ENCODE measurements at regions of chr2 and their contacts with region 1.

Region 1: GRCh38 chr2:197293252-197294007 is 17.1 kb downstream of the ANKRD44 start:
- DNase-seq: no peak
- ATAC-seq: peak; percentile 41
- H3K4me3 Mint-ChIP-seq: peak overlapping the region; percentile 78
- H3K27ac Mint-ChIP-seq: peak overlapping the region; percentile 96
- H3K4me1 Mint-ChIP-seq: peaks cover 91% of the 10 kb centered on the region
- H3K27me3 Mint-ChIP-seq: no peaks in the 10 kb centered on the region
- CTCF ChIP-seq: no peak

Region 2: GRCh38 chr2:197198890-197199289 is 94.5 kb before region 1 on chr2:
- CTCF ChIA-PET with region 1: no interaction called
- POLR2A ChIA-PET with region 1: interaction called, 14 read pairs
- intact Hi-C with region 1: no loop called
- DNase-seq: peak; percentile 56
- ATAC-seq: peak; percentile 94
- H3K4me3 Mint-ChIP-seq: peak overlapping the region; percentile 88
- H3K27ac Mint-ChIP-seq: peak overlapping the region; percentile 96
- H3K4me1 Mint-ChIP-seq: peaks cover 83% of the 10 kb centered on the region
- H3K27me3 Mint-ChIP-seq: no peaks in the 10 kb centered on the region
- CTCF ChIP-seq: no peak

Region 3: GRCh38 chr2:197209742-197210408 is 83.6 kb before region 1 on chr2:
- CTCF ChIA-PET with region 1: interaction called, 3 read pairs
- POLR2A ChIA-PET with region 1: interaction called, 7 read pairs
- intact Hi-C with region 1: loop called (anchors 2 kb)
- DNase-seq: no peak
- ATAC-seq: peak; percentile 13
- H3K4me3 Mint-ChIP-seq: peak overlapping the region; percentile 66
- H3K27ac Mint-ChIP-seq: peak overlapping the region; percentile 98
- H3K4me1 Mint-ChIP-seq: peaks cover 99% of the 10 kb centered on the region
- H3K27me3 Mint-ChIP-seq: no peaks in the 10 kb centered on the region
- CTCF ChIP-seq: no peak

Region 4: GRCh38 chr2:197216361-197216979 is 77.0 kb before region 1 on chr2:
- CTCF ChIA-PET with region 1: no interaction called
- POLR2A ChIA-PET with region 1: interaction called, 4 read pairs
- intact Hi-C with region 1: loop called (anchors 2 kb)
- DNase-seq: no peak
- ATAC-seq: peak; percentile 71
- H3K4me3 Mint-ChIP-seq: peak overlapping the region; percentile 72
- H3K27ac Mint-ChIP-seq: peak overlapping the region; percentile 98
- H3K4me1 Mint-ChIP-seq: peaks cover 91% of the 10 kb centered on the region
- H3K27me3 Mint-ChIP-seq: no peaks in the 10 kb centered on the region
- CTCF ChIP-seq: no peak

Region 5: GRCh38 chr2:197261808-197262226 is 31.6 kb before region 1 on chr2:
- CTCF ChIA-PET with region 1: no interaction called
- POLR2A ChIA-PET with region 1: interaction called, 21 read pairs
- intact Hi-C with region 1: loop called (anchors 1 kb)
- DNase-seq: no peak
- ATAC-seq: peak; percentile 76
- H3K4me3 Mint-ChIP-seq: peak overlapping the region; percentile 66
- H3K27ac Mint-ChIP-seq: peak overlapping the region; percentile 80
- H3K4me1 Mint-ChIP-seq: peaks cover 84% of the 10 kb centered on the region
- H3K27me3 Mint-ChIP-seq: no peaks in the 10 kb centered on the region
- CTCF ChIP-seq: no peak

Region 6: GRCh38 chr2:197279997-197280746 is 13.3 kb before region 1 on chr2:
- CTCF ChIA-PET with region 1: interaction called, 3 read pairs
- POLR2A ChIA-PET with region 1: interaction called, 11 read pairs
- intact Hi-C with region 1: loop called (anchors 1 kb)
- DNase-seq: no peak
- ATAC-seq: peak; percentile 64
- H3K4me3 Mint-ChIP-seq: peak overlapping the region; percentile 60
- H3K27ac Mint-ChIP-seq: peak overlapping the region; percentile 80
- H3K4me1 Mint-ChIP-seq: peaks cover 86% of the 10 kb centered on the region
- H3K27me3 Mint-ChIP-seq: no peaks in the 10 kb centered on the region
- CTCF ChIP-seq: no peak